ENCODE measurements at regions of chr11 and their contacts with region 1.

Region 1: DNA sequence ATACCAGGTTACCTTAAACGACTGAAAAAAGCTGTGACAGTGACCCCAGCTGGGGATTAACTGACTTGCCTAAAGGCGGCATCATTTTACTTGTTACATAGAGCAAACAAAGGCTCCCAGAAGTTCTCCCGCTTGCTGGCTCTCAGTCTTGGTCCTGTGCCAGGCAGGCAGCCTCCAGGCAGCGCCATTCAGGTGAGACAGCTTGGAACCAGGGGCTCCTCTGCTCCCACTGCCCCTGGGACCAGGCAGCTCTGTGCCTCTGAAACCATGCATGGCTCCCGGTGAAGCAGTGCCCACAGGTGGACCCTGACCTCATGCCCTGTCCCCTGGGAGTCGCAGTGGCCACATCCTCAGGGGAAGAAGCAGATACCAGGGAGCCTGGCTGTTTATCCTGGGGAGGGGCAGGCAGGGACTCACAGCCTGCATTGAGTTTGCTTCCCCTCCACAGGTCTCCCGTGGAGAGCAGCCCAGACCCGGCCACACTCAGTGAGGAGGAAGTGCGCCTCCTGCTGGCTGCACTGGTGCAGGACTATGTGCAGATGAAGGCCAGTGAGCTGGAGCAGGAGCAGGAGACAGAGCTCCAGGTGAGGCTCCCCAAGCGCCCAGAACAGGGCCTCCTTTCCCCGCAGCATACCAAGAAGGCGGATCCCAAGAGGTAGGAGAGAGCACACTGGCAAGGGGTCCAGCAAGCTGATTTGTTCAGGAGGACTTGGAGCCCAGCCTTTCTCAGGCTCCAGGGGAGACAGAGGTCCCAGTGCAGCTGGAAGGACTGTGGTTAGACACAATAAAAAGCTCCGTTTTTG is 15.6 kb upstream of the CYP2R1 start:
- DNase-seq: peak; percentile 70 to 84 (median 76)
- H3K4me3 ChIP-seq: no peak overlapping the region
- H3K4me3 Mint-ChIP-seq: peak overlapping the region in 1 of 7 donors; percentile 76
- H3K27ac ChIP-seq: no peak overlapping the region
- H3K27ac Mint-ChIP-seq: peak overlapping the region in 7 of 8 donors; percentile 17 to 93 (median 76)
- H3K4me1 ChIP-seq: peaks cover 16% of the 10 kb centered on the region
- H3K4me1 Mint-ChIP-seq: peaks cover 29 to 51% (median 42%) of the 10 kb centered on the region in 3 donors
- H3K27me3 ChIP-seq: no peaks in the 10 kb centered on the region
- H3K27me3 Mint-ChIP-seq: peaks cover 0 to 4% of the 10 kb centered on the region in 2 donors

Region 2: GRCh38 chr11:14537134-14537599 is 370.4 kb before region 1 on chr11:
- CTCF ChIA-PET with region 1: interaction called, 18 read pairs
- POLR2A ChIA-PET with region 1: no interaction called
- DNase-seq: peak in 3 of 5 donors; percentile 4 to 69 (median 54)
- H3K4me3 ChIP-seq: peak overlapping the region; percentile 51
- H3K4me3 Mint-ChIP-seq: peak overlapping the region; percentile 26 to 88 (median 63)
- H3K27ac ChIP-seq: no peak overlapping the region
- H3K27ac Mint-ChIP-seq: peak overlapping the region in 7 of 8 donors; percentile 25 to 95 (median 87)
- H3K4me1 ChIP-seq: no peaks in the 10 kb centered on the region
- H3K4me1 Mint-ChIP-seq: peaks cover 12 to 28% (median 28%) of the 10 kb centered on the region in 3 donors
- H3K27me3 ChIP-seq: no peaks in the 10 kb centered on the region
- H3K27me3 Mint-ChIP-seq: no peaks in the 10 kb centered on the region

Region 3: GRCh38 chr11:14643697-14644225 is 263.9 kb before region 1 on chr11 and contains the start of gene PDE3B:
- CTCF ChIA-PET with region 1: interaction called, 12 read pairs
- POLR2A ChIA-PET with region 1: no interaction called
- DNase-seq: peak; percentile 62 to 83 (median 70)
- H3K4me3 ChIP-seq: peak within 1 kb of the TSS; percentile 79
- H3K4me3 Mint-ChIP-seq: peak within 1 kb of the TSS; percentile 88 to 96 (median 92)
- H3K27ac ChIP-seq: peak within 1 kb of the TSS; percentile 77
- H3K27ac Mint-ChIP-seq: peak within 1 kb of the TSS; percentile 80 to 94 (median 90)
- H3K4me1 ChIP-seq: peaks cover 40% of the 10 kb centered on the region
- H3K4me1 Mint-ChIP-seq: peaks cover 57 to 70% (median 57%) of the 10 kb centered on the region in 3 donors
- H3K27me3 ChIP-seq: no peaks in the 10 kb centered on the region
- H3K27me3 Mint-ChIP-seq: peaks cover 2 to 6% of the 10 kb centered on the region in 2 donors
- total RNA-seq, gene PDE3B: 47.0 to 47.2 TPM

Region 4: GRCh38 chr11:14789879-14790484 is 117.6 kb before region 1 on chr11:
- CTCF ChIA-PET with region 1: interaction called, 41 read pairs
- POLR2A ChIA-PET with region 1: no interaction called
- DNase-seq: peak in 1 of 5 donors; percentile 4
- H3K4me3 ChIP-seq: no peak overlapping the region
- H3K4me3 Mint-ChIP-seq: no peak overlapping the region
- H3K27ac ChIP-seq: no peak overlapping the region
- H3K27ac Mint-ChIP-seq: peak overlapping the region in 2 of 8 donors; percentile 30 to 46
- H3K4me1 ChIP-seq: no peaks in the 10 kb centered on the region
- H3K4me1 Mint-ChIP-seq: peaks cover 1 to 15% (median 7%) of the 10 kb centered on the region in 3 donors
- H3K27me3 ChIP-seq: no peaks in the 10 kb centered on the region
- H3K27me3 Mint-ChIP-seq: no peaks in the 10 kb centered on the region

Region 5: GRCh38 chr11:14932447-14932846 is 24.8 kb after region 1 on chr11:
- CTCF ChIA-PET with region 1: no interaction called
- POLR2A ChIA-PET with region 1: no interaction called
- DNase-seq: no peak
- H3K4me3 ChIP-seq: no peak overlapping the region
- H3K4me3 Mint-ChIP-seq: no peak overlapping the region
- H3K27ac ChIP-seq: no peak overlapping the region
- H3K27ac Mint-ChIP-seq: no peak overlapping the region
- H3K4me1 ChIP-seq: no peaks in the 10 kb centered on the region
- H3K4me1 Mint-ChIP-seq: no peaks in the 10 kb centered on the region
- H3K27me3 ChIP-seq: no peaks in the 10 kb centered on the region
- H3K27me3 Mint-ChIP-seq: peaks cover 3 to 6% of the 10 kb centered on the region in 2 donors

Region 6: DNA sequence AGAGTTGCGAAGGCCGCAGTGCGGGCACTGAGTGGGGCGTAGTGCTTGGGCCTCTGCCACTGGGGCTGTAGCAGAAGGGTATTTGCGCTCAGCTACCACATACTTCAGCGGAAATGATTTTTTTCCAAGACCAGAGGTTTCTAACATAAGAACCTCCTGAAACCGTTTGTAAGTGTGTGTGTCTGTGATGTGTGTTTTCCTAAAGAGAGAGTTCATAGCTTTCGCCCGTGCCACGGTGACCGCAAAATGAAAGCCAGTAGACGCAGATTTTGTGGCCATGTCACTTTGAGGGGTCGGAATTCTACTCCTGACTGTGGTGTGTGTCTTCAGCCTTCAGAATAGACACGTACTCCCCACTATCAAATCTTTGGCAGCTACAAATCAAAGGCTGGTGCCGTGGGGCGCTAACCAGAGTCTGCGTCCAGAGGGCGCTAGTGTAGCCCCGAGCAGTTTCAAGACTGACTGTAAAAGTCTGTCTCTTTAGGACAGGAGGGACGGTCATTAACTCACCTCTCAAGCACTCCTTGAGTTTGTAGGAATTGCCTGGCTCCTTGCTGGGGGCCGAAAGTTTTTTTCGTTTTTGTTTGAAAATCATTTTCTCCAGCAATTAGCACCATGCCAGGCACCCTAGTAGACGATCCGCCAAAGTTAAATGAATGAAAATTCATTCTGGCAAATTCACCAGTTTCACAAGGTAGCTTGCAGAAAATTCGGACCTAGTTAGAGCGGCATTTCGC is 67.1 kb after region 1 on chr11:
- CTCF ChIA-PET with region 1: interaction called, 14 read pairs
- POLR2A ChIA-PET with region 1: no interaction called
- DNase-seq: peak in 4 of 5 donors; percentile 27 to 62 (median 44)
- H3K4me3 ChIP-seq: peak overlapping the region; percentile 26
- H3K4me3 Mint-ChIP-seq: peak overlapping the region; percentile 74 to 85 (median 80)
- H3K27ac ChIP-seq: no peak overlapping the region
- H3K27ac Mint-ChIP-seq: no peak overlapping the region
- H3K4me1 ChIP-seq: peaks cover 25% of the 10 kb centered on the region
- H3K4me1 Mint-ChIP-seq: peaks cover 32 to 35% (median 33%) of the 10 kb centered on the region in 3 donors
- H3K27me3 ChIP-seq: peaks cover 45% of the 10 kb centered on the region
- H3K27me3 Mint-ChIP-seq: peaks cover 53 to 72% of the 10 kb centered on the region in 2 donors

Region 7: GRCh38 chr11:15074206-15075161 is 166.9 kb after region 1 on chr11:
- CTCF ChIA-PET with region 1: interaction called, 90 read pairs
- POLR2A ChIA-PET with region 1: no interaction called
- DNase-seq: peak; percentile 60 to 82 (median 65)
- H3K4me3 ChIP-seq: peak overlapping the region; percentile 67
- H3K4me3 Mint-ChIP-seq: peak overlapping the region; percentile 78 to 87 (median 84)
- H3K27ac ChIP-seq: no peak overlapping the region
- H3K27ac Mint-ChIP-seq: peak overlapping the region in 4 of 8 donors; percentile 26 to 62 (median 46)
- H3K4me1 ChIP-seq: peaks cover 15% of the 10 kb centered on the region
- H3K4me1 Mint-ChIP-seq: peaks cover 17 to 23% (median 17%) of the 10 kb centered on the region in 3 donors
- H3K27me3 ChIP-seq: no peaks in the 10 kb centered on the region
- H3K27me3 Mint-ChIP-seq: peaks cover 13 to 29% of the 10 kb centered on the region in 2 donors

Region 8: GRCh38 chr11:15390857-15391256 is 483.2 kb after region 1 on chr11:
- CTCF ChIA-PET with region 1: no interaction called
- POLR2A ChIA-PET with region 1: no interaction called
- DNase-seq: no peak
- H3K4me3 ChIP-seq: no peak overlapping the region
- H3K4me3 Mint-ChIP-seq: no peak overlapping the region
- H3K27ac ChIP-seq: no peak overlapping the region
- H3K27ac Mint-ChIP-seq: no peak overlapping the region
- H3K4me1 ChIP-seq: no peaks in the 10 kb centered on the region
- H3K4me1 Mint-ChIP-seq: no peaks in the 10 kb centered on the region
- H3K27me3 ChIP-seq: no peaks in the 10 kb centered on the region
- H3K27me3 Mint-ChIP-seq: peaks cover 0 to 3% of the 10 kb centered on the region in 2 donors